Activated CD4-positive, alpha-beta T cell treated with anti-CD3 and anti-CD28 coated beads, Interleukin-2, amount 10 ng/mL, durations not matched to agents 24 days and 14 days (primary cell): ENCODE measurements at regions of chr14 and their contacts with region 1.

Region 1: DNA sequence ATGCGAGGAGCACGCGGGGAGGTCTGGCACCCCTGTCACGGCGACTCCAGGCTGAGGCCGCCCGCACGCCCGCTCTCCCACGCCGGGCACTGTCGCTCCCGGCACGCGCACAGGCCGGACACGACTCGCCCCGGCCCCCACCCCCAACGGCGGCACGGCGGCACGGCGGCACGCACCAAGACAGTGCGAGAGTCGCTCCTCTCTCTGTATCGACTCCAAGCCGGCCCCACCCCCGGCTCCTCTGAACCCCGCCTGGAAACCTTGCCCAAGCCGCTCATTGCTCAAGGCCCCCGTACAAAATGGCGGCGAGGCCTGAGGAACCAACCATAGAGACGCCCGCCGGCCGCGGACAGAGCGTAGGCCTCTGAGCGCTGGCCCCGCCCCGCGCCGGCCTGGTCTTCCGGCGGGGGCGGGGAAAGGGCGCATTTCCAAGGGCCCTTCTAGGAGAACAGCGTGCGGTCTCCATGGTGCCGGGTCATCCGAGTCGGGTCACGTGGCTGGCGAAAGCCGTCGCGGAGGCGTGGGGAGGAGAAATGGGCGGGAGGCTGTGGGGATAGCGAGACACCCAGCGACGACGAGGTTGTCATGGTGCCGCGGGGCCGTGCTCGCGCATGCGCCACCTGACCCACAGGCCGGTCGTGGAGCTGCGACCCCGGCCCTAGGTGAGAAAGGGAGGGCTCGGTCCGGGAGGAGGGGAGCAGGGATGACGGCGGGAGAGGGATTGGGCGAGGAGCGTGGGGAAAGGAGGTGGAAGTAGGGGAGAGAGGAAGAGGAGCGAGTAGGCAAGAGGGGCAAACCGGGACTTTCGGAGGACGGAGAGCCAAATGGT is at the start of gene CIPC:
- DNase-seq: peak; percentile 100
- H3K4me3 Mint-ChIP-seq: peak within 1 kb of the TSS; percentile 87
- H3K27ac Mint-ChIP-seq: peak within 1 kb of the TSS; percentile 93
- H3K4me1 Mint-ChIP-seq: peaks cover 36% of the 10 kb centered on the region
- H3K27me3 Mint-ChIP-seq: peaks cover 8% of the 10 kb centered on the region
- total RNA-seq, gene CIPC: 12.7 and 14.0 TPM in 2 replicates

Region 2: DNA sequence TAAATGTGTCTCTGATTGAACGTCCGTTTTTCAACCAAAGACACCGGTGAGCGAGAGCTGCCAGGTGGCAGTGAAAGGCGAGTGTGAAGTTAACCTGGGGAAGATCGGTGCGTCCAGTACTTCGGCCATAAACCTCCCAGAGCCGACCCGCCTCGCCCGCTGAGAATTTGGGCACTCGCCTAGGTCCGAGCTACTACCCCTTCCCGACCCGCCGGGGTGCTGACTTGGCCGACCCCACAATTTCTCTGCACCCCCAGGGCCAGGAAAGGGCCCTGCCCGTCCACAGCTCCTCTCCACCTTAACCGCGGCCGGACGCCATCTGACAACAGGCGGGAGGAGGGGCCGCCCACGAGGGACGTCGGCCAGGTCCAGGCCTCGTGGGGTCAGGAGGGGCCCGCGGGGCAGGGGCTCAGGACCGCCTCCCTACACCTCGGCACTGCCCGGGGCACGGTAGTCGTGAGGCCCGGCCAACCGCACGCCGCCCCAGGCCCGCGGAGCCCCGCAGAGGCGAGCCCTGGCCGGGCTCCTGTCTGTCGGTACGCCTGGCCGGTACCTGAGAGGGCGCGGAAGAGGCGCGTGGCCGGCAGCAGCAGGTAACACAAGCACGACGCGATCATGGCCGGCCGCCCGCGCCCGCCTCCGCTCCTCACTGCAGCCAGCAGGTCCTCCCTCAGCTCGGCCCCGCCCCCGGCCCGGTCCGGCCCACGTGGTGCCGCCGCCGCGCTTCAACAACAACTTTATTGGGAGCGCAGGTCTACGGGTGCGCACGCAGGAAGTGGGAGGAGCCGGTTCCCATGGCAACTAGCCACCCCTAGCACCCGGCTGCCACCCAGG is 285.5 kb before region 1 on chr14 and contains the start of gene ANGEL1:
- intact Hi-C with region 1: loop called (anchors 1 kb)
- DNase-seq: peak; percentile 99
- H3K4me3 Mint-ChIP-seq: peak within 1 kb of the TSS; percentile 98
- H3K27ac Mint-ChIP-seq: peak within 1 kb of the TSS; percentile 91
- H3K4me1 Mint-ChIP-seq: peaks cover 21% of the 10 kb centered on the region
- H3K27me3 Mint-ChIP-seq: no peaks in the 10 kb centered on the region
- total RNA-seq, gene ANGEL1: 16.4 and 17.2 TPM in 2 replicates

Region 3: DNA sequence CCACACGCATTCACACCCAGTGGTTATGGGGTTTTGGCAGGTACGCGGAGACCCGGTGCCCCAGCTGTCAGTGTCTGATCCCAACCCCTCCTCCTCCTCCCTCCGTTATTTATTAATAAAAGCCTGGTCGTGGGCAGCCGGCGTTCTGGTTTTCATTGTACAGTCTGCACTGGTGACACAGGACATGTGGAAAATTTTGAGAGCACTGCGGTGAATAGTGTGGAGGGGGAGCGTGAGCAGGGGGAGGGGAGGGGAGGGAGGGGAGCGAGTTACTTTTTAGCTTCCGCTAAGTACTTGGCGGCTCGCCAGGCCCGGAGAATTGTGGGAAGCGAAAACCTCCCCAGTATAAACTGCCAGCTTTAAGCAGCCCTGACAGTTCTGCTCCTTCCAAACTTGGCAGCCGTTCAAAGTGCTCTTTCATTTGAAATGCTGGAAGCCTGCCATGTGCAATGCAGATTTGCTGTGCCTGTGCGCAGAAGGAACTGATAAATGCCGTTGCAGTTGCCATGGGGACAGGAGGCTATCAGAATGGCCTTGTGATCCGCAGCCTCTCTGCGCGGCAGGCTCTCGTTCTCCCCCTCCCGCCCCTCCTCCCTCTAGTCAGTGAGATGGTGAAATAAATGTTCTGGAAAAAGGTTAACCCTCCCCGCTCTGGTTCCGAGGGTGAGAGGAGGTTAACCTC is 57.7 kb before region 1 on chr14:
- intact Hi-C with region 1: loop called (anchors 2 kb)
- DNase-seq: peak; percentile 97
- H3K4me3 Mint-ChIP-seq: peak overlapping the region; percentile 77
- H3K27ac Mint-ChIP-seq: peak overlapping the region; percentile 90
- H3K4me1 Mint-ChIP-seq: peaks cover 76% of the 10 kb centered on the region
- H3K27me3 Mint-ChIP-seq: no peaks in the 10 kb centered on the region

Region 4: GRCh38 chr14:77301103-77301502 is 203.2 kb after region 1 on chr14:
- intact Hi-C with region 1: loop called (anchors 5 kb)
- DNase-seq: peak; percentile 88
- H3K4me3 Mint-ChIP-seq: no peak overlapping the region
- H3K27ac Mint-ChIP-seq: no peak overlapping the region
- H3K4me1 Mint-ChIP-seq: peaks cover 22% of the 10 kb centered on the region
- H3K27me3 Mint-ChIP-seq: no peaks in the 10 kb centered on the region

Region 5: DNA sequence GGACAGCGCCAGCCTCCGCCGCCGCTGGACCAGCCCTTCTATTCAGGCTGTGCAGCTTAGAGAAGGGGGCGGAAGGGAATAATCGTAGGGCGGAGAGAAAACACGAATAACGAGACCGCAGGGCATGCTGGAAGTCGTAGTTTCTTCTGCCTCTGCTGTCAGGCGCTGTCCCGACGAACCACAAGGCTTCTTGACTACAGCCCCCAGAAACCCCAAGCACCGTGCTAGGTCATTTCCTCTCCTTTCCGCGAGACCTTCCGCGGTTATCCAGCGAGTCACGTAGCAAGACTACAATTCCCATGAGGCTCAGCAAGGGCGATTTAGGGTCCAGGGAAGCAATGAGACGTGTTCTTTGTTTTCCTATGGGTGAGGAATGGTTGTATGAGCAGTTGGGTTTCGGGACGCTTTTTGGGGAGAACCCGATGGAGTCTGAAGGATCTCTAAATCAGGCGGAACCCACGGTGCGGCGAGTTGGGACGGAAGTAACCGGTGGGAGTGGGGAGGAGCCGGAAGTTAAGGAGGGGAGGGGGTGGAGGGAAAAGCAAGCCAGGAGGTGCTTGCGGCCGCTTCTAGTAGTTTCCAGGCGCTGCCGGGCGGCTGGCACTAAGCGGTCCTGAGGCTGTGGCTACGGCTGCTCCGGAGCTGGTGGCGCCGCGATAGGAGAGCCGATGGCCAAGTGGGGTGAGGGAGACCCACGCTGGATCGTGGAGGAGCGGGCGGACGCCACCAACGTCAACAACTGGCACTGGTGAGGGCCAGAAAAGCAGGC is 359.8 kb after region 1 on chr14 and contains the starts of genes AHSA1 and VIPAS39:
- intact Hi-C with region 1: loop called (anchors 1 kb)
- DNase-seq: peak; percentile 98
- H3K4me3 Mint-ChIP-seq: peak within 1 kb of the TSS; percentile 100
- H3K27ac Mint-ChIP-seq: peak within 1 kb of the TSS; percentile 100
- H3K4me1 Mint-ChIP-seq: peaks cover 27% of the 10 kb centered on the region
- H3K27me3 Mint-ChIP-seq: no peaks in the 10 kb centered on the region
- total RNA-seq, gene AHSA1: 418 and 441 TPM in 2 replicates
- total RNA-seq, gene VIPAS39: 17.7 and 18.5 TPM in 2 replicates